Heart left ventricle (tissue), 16 donors: ENCODE measurements at regions of chrX and their contacts with region 1.

Region 1: DNA sequence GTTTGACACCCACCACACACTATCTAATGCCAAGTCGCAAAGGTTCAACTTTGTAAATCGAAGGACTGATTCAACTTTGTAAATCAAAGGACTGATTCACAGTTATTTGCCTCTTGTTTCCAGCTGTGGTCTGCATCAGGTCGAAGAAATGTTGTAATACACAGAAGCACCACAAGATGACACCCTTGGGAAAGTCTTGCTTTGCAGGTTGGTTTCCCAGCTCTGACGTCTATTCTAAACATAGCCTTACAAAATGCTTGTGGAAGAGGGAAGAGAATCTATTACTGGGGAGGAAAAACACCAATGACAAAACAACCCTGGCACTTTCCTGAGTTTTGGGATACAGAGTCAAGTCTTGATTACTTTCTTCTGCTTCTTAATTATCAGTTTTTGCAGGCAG is 35.3 kb downstream of the SUPT20HL1 start:
- DNase-seq: peak in 2 of 5 donors; percentile 38 to 40
- ATAC-seq: peak; percentile 55 to 83 (median 80)
- H3K4me3 ChIP-seq: no peak overlapping the region
- H3K27ac ChIP-seq: peak overlapping the region in 4 of 12 donors; percentile 32 to 47 (median 44)
- H3K4me1 ChIP-seq: peaks cover 0 to 7% (median 0%) of the 10 kb centered on the region in 12 donors
- H3K27me3 ChIP-seq: peaks cover 0 to 20% (median 0%) of the 10 kb centered on the region in 9 donors
- CTCF ChIP-seq: peak; percentile 58 to 78 (median 70)
- POLR2A ChIP-seq: no peak

Region 2: GRCh38 chrX:24204331-24204730 is 191.4 kb before region 1 on chrX:
- intact Hi-C with region 1: no loop called
- DNase-seq: no peak
- ATAC-seq: no peak
- H3K4me3 ChIP-seq: no peak overlapping the region
- H3K27ac ChIP-seq: no peak overlapping the region
- H3K4me1 ChIP-seq: peaks cover 0 to 44% (median 16%) of the 10 kb centered on the region in 12 donors
- H3K27me3 ChIP-seq: no peaks in the 10 kb centered on the region
- CTCF ChIP-seq: no peak
- POLR2A ChIP-seq: no peak

Region 3: DNA sequence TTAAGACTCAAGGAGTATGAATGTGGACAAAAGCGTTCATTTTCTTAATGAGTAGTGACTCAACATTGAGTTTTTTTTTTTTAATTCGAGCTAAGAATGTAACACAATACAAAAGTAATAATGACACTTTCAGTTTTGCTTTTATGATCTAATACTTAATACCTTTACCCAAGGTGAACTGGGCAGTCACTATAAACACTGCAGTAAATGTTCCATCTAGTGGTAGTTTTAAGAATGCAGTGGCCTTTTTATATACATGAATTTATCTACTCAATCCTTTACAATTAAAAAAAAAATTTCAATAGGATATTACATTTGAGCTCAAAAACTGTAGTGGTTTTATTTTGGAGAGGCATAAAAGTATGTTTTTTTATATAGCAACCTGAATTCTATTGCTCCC is 103.2 kb after region 1 on chrX:
- intact Hi-C with region 1: loop called (anchors 1 to 5 kb)
- DNase-seq: no peak
- ATAC-seq: peak in 1 of 4 donors; percentile 39
- H3K4me3 ChIP-seq: no peak overlapping the region
- H3K27ac ChIP-seq: no peak overlapping the region
- H3K4me1 ChIP-seq: peaks cover 0 to 16% (median 5%) of the 10 kb centered on the region in 12 donors
- H3K27me3 ChIP-seq: no peaks in the 10 kb centered on the region
- CTCF ChIP-seq: peak; percentile 35 to 57 (median 48)
- POLR2A ChIP-seq: no peak

Region 4: DNA sequence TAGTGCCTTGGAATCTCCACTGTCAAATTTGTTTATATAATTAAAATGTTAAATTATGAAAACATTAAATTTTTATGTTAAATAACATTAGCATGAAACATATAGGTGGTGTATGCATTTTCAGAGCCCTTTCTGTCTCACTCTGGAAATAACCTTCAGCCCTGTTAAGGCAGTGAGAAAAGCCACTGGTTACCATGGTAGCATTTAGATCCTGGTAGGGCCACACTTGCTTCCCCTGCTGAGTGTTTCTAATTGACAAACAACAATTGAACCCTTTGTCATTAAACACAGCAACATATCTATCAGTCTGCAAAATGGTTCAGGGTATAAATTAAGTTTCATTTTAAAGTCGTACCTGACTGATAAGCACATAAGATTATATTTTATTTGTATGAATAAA is 132.8 kb after region 1 on chrX:
- intact Hi-C with region 1: no loop called
- DNase-seq: no peak
- ATAC-seq: no peak
- H3K4me3 ChIP-seq: no peak overlapping the region
- H3K27ac ChIP-seq: no peak overlapping the region
- H3K4me1 ChIP-seq: no peaks in the 10 kb centered on the region
- H3K27me3 ChIP-seq: peaks cover 0 to 4% (median 0%) of the 10 kb centered on the region in 9 donors
- CTCF ChIP-seq: no peak
- POLR2A ChIP-seq: no peak

Region 5: DNA sequence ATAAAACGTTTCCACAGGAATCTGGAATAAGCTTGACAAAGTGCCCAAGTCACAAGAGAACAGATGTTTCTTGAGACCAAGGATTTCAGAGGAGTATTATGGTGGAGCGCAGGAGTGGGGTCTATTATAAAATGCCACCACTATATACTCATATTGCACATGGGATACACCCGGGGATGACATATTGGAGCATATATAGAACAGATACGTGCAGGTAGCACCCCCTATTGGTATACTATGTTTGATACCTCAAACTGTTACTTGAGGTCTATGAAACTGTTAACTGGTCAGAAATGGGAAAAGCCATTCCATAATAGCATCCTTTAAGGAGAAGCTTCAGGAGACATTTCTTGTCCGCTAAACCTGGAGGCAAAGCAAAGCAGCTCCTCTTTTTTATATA is 165.3 kb after region 1 on chrX:
- intact Hi-C with region 1: loop called in 1 of 10 experiments (anchors 10 kb)
- DNase-seq: no peak
- ATAC-seq: no peak
- H3K4me3 ChIP-seq: no peak overlapping the region
- H3K27ac ChIP-seq: no peak overlapping the region
- H3K4me1 ChIP-seq: no peaks in the 10 kb centered on the region
- H3K27me3 ChIP-seq: no peaks in the 10 kb centered on the region
- CTCF ChIP-seq: peak in 8 of 12 donors; percentile 5 to 32 (median 20)
- POLR2A ChIP-seq: no peak

Region 6: DNA sequence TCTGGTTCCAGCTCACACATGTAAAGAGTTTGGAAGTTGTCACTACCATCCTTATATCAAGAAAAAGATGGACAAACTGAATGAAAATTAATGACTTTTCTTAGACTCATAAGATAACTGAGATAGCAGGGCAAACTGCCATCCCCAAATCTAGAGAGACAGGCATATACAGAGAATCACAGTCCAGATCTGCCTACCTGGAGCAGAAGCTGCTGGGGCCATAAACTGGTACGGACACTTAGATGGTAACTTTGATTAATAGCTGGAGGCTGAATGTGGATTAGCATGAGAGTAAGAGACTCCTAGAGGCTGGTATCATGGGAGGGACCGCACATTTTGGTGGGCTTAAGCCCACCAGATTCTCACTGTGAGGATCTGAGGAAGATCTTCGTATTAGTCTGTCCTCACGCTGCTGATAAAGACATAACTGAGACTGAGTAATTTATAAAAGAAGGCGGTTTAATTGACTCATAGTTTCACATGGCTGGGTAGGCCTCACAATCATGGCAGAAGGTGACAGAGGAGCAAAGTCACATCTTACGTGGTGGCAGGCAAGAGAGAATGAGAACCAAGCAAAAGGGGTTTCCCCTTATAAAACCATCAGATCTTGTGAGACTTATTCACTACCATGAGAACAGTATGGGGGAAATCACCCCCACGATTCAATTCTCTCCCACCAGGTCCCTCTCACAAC is 287.1 kb after region 1 on chrX:
- intact Hi-C with region 1: loop called in 1 of 10 experiments (anchors 10 kb)
- DNase-seq: no peak
- ATAC-seq: no peak
- H3K4me3 ChIP-seq: no peak overlapping the region
- H3K27ac ChIP-seq: no peak overlapping the region
- H3K4me1 ChIP-seq: no peaks in the 10 kb centered on the region
- H3K27me3 ChIP-seq: peaks cover 0 to 5% (median 0%) of the 10 kb centered on the region in 9 donors
- CTCF ChIP-seq: no peak
- POLR2A ChIP-seq: no peak

Region 7: DNA sequence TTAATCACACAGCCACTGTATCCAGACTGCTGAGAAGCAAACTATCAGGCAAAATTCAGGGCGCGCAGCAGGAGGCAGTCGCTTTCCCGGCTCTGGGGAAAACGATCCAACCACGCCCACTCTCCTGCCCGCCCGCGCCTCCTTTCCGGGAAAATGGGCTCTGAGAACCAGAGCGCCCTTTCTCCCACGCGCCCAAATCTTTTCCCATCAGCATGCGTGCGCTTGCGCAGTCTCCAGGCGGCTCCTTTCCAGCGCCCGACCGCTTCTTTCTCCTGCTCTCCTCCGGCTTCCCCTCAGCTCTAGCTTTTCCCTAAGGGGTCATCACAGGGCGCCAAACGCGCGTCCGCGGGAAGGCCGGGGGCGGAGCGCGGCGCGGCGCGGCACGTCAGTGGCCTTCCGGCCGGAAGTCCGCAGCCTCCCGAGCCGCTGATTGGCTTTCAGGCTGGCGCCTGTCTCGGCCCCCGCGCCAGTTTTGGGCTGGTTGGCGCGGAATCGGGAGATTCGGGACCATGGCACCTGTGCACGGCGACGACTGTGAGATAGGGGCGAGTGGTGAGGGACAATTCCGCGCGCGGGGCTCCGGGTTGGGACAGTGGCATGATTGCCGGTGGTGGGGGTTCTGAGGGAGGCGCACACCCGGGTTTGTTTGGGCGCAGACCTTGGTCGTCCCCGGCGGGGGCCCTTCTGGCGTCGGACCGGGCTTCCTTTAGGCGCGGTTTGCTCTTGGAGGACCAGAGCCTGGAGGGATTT is 297.9 kb after region 1 on chrX and contains the start of gene POLA1:
- intact Hi-C with region 1: loop called in 2 of 10 experiments (anchors 10 kb)
- DNase-seq: peak; percentile 92 to 95 (median 94)
- ATAC-seq: peak; percentile 98 to 99 (median 99)
- H3K4me3 ChIP-seq: peak within 1 kb of the TSS; percentile 0 to 92 (median 71)
- H3K27ac ChIP-seq: peak within 1 kb of the TSS in 11 of 12 donors; percentile 56 to 89 (median 82)
- H3K4me1 ChIP-seq: peaks cover 0 to 12% (median 0%) of the 10 kb centered on the region in 12 donors
- H3K27me3 ChIP-seq: no peaks in the 10 kb centered on the region
- CTCF ChIP-seq: peak in 6 of 12 donors; percentile 10 to 47 (median 28)
- POLR2A ChIP-seq: peak in 1 of 2 donors; percentile 23
- total RNA-seq, gene POLA1: 4.1 to 8.1 (median 6.6) TPM